ENCODE measurements at regions of chr2 and their contacts with region 1.

Region 1: DNA sequence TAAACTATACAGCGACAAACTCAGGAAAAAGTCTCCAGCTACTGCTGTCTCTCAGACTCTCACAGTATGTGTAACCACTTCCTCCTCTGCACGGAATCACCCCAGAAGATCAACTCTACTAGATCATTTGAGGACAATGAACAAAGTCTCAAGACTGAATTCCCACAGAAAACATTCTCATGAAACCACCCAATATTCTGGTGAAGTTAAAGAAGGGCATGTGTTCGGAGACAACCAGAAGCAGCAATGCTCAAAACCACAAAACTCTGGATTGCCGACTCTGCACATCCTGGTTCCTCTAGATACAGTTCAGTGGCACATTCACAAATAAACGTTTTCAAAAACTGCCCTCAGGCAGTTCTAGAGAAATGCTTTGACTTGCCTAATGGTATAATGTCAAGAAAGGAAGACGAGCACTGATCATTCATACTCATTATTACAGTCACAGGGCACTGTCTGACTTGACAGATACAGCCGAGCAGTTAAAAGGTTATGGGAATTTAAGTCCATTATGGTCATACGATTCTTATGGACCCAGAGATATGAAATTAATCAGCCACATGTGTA is 91.9 kb upstream of the STK17B start:
- DNase-seq: no peak
- CTCF ChIP-seq: no peak

Region 2: GRCh38 chr2:196171248-196171871 is 91.9 kb before region 1 on chr2 and contains the start of gene STK17B:
- in situ Hi-C with region 1: loop called (anchors 25 kb)
- DNase-seq: peak; percentile 96
- CTCF ChIP-seq: peak; percentile 3

Region 3: GRCh38 chr2:196390243-196391148 is 127.2 kb after region 1 on chr2:
- in situ Hi-C with region 1: no loop called
- DNase-seq: no peak
- CTCF ChIP-seq: no peak